Activated CD4-positive, alpha-beta T cell treated with anti-CD3 and anti-CD28 coated beads for 36 hours (primary cell): ENCODE measurements at regions of chr1 and their contacts with region 1.

Region 1: DNA sequence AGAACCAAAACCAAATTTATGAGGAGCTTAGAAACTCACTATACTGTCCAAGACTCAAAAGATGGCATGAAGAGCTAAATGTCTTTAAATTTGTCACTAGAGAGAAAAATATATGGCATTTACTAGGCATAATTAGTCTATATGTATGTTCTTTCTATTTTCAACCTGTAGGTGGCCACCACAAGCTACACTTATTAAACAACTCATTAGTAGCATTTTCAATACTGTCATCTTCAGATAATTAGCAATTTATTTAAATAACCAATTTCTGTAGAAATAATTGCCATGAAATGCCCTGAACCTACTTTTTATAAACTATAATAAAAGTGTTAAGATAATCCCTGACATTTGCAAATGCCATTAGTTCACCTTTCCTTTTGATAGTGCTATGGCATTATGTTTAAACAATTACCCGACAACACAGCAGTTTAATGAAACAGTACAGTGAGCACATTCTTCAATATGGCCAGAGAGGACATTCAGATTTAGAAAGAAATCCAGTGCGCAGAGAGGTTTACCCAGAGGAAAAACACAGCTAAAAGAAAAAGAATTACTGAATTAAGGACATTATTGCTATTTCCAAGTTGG is 522.5 kb downstream of the PTBP2 start:
- DNase-seq: no peak
- ATAC-seq: no peak
- H3K4me3 Mint-ChIP-seq: no peak overlapping the region
- H3K27ac Mint-ChIP-seq: no peak overlapping the region
- H3K4me1 Mint-ChIP-seq: no peaks in the 10 kb centered on the region
- H3K27me3 Mint-ChIP-seq: no peaks in the 10 kb centered on the region

Region 2: GRCh38 chr1:97254731-97255463 is 10.8 kb after region 1 on chr1:
- CTCF ChIA-PET with region 1: interaction called, 11 read pairs
- POLR2A ChIA-PET with region 1: no interaction called
- intact Hi-C with region 1: no loop called
- DNase-seq: no peak
- ATAC-seq: peak; percentile 44
- H3K4me3 Mint-ChIP-seq: no peak overlapping the region
- H3K27ac Mint-ChIP-seq: no peak overlapping the region
- H3K4me1 Mint-ChIP-seq: peaks cover 4% of the 10 kb centered on the region
- H3K27me3 Mint-ChIP-seq: no peaks in the 10 kb centered on the region

Region 3: DNA sequence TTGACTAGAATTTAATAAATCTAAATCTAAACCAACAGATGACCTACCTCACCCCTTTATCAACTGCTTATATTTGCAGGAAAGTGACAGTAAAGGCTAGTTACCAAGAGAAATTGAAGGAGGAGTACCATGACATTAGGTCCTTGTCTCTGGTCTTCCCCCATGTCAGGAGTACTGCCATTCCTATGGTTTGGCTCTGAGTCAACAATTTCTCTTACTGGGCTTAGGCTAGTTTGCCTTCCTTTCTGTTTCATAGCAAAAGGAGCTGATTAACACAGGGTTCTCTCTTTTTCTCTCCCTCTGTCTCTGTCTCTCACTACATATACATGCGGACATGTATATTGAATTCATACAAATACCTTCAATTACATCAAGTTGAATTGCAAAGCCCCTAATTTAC is 96.9 kb after region 1 on chr1:
- CTCF ChIA-PET with region 1: no interaction called
- POLR2A ChIA-PET with region 1: no interaction called
- intact Hi-C with region 1: no loop called
- DNase-seq: no peak
- ATAC-seq: no peak
- H3K4me3 Mint-ChIP-seq: no peak overlapping the region
- H3K27ac Mint-ChIP-seq: no peak overlapping the region
- H3K4me1 Mint-ChIP-seq: no peaks in the 10 kb centered on the region
- H3K27me3 Mint-ChIP-seq: no peaks in the 10 kb centered on the region

Region 4: DNA sequence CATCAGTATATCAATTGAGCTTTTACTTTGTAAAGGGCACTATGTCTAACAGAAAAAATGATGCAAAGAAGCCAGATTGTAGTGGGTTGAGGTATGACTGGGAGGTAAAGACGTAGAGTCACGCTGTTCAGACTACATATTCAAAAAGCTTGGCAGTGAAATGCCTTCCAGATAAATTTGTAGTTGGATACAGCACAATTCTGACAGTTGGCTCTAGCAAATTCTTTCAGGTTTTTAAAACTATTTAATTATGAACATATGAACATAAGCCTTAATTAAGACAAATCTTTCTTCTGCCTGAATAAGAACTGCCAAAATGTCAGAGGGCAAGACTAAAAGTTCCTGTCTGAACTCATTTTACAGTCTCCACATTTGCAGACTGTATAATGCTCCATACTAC is 557.9 kb after region 1 on chr1:
- CTCF ChIA-PET with region 1: no interaction called
- POLR2A ChIA-PET with region 1: no interaction called
- intact Hi-C with region 1: loop called in 1 of 2 experiments (anchors 5 kb)
- DNase-seq: no peak
- ATAC-seq: no peak
- H3K4me3 Mint-ChIP-seq: no peak overlapping the region
- H3K27ac Mint-ChIP-seq: no peak overlapping the region
- H3K4me1 Mint-ChIP-seq: peaks cover 9% of the 10 kb centered on the region
- H3K27me3 Mint-ChIP-seq: no peaks in the 10 kb centered on the region

Region 5: DNA sequence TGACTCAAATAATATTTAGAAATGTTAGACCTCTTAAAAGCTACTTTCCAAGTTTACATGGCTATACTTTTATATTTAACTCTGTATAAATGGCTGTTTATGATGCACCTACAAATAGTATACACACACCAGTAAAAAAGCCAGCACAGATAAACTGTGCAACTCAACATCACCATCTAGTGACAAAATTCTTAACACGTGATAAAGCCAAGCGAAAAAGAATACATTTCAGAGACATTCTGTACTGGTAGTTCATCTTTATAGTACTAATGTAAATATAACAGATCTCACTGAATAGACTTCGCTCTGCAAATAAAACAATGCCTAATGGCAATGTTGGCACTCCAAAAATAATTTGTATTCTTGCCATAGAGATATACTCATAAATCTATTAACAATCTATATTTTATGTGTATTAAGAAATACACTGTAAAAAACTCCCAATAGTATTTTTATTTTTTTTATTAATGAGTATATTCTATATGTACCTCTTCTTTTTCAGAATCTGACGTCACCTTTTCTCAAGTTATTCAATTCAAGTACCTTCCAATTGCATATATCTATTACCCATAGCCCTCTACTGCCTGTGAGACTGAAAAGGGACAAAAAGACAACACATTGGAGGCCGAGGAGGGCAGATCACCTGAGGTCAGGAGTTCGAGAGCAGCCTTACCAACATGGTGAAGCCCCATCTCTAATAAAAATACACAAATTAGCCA is 576.6 kb after region 1 on chr1:
- CTCF ChIA-PET with region 1: interaction called, 4 read pairs
- POLR2A ChIA-PET with region 1: no interaction called
- intact Hi-C with region 1: loop called in 1 of 2 experiments (anchors 1 kb)
- DNase-seq: no peak
- ATAC-seq: peak; percentile 39
- H3K4me3 Mint-ChIP-seq: no peak overlapping the region
- H3K27ac Mint-ChIP-seq: no peak overlapping the region
- H3K4me1 Mint-ChIP-seq: no peaks in the 10 kb centered on the region
- H3K27me3 Mint-ChIP-seq: no peaks in the 10 kb centered on the region

Region 6: GRCh38 chr1:98048244-98048643 is 804.2 kb after region 1 on chr1:
- CTCF ChIA-PET with region 1: no interaction called
- POLR2A ChIA-PET with region 1: no interaction called
- intact Hi-C with region 1: loop called (anchors 5 to 10 kb)
- DNase-seq: peak; percentile 87
- ATAC-seq: peak; percentile 67
- H3K4me3 Mint-ChIP-seq: peak overlapping the region; percentile 18
- H3K27ac Mint-ChIP-seq: no peak overlapping the region
- H3K4me1 Mint-ChIP-seq: peaks cover 37% of the 10 kb centered on the region
- H3K27me3 Mint-ChIP-seq: peaks cover 76% of the 10 kb centered on the region